CD4-positive, alpha-beta T cell (primary cell): ENCODE measurements at regions of chr7 and their contacts with region 1.

Region 1: DNA sequence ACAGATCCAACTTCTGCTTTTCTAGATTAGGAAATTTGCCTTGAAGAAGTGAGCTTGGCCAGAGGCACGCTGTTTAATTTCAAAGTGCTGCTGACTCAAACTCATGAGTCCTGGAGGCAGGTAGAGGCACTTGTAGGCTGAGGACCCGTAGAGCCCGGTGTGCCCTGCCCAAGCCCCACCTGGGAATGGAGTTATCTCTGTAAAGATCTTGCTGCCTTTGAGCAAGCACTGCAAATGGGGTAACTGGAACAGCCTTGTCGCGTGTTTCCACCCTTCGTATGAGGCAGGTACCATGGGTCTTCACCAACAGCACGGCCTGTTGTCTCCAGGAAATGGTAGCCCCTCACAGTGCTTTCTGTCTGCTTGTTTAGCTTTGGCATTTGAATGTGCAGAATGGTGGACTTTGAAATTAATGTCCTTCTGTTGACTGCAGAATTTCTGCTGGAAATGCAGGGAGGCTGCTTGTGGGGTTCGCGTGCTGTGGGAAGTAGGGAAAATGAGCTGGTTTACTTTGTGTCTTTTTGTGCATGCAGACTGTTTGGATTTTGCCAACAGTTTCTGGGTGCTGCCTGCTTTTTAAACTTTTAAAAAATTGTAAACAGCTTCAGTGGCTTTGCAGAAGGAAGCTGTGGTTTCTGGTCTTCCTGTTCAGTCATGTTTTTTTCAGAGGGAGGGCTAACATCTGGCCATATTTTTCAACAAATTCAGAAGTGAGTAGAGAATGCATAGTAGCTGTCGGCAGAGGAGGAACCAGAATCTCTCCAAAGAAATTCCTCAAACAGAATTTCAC is 27.2 kb downstream of the CCM2 start:
- DNase-seq: peak in 11 of 14 experiments; percentile 13 to 82 (median 36)
- ATAC-seq: peak; percentile 57
- H3K4me3 ChIP-seq: peak overlapping the region; percentile 96
- H3K4me3 Mint-ChIP-seq: peak overlapping the region; percentile 94
- H3K27ac ChIP-seq: peak overlapping the region; percentile 82 to 83
- H3K27ac Mint-ChIP-seq: peak overlapping the region; percentile 95
- H3K4me1 ChIP-seq: peaks cover 56% of the 10 kb centered on the region
- H3K4me1 Mint-ChIP-seq: peaks cover 67% of the 10 kb centered on the region
- H3K27me3 ChIP-seq: no peaks in the 10 kb centered on the region
- H3K27me3 Mint-ChIP-seq: no peaks in the 10 kb centered on the region
- CTCF ChIP-seq: no peak

Region 2: DNA sequence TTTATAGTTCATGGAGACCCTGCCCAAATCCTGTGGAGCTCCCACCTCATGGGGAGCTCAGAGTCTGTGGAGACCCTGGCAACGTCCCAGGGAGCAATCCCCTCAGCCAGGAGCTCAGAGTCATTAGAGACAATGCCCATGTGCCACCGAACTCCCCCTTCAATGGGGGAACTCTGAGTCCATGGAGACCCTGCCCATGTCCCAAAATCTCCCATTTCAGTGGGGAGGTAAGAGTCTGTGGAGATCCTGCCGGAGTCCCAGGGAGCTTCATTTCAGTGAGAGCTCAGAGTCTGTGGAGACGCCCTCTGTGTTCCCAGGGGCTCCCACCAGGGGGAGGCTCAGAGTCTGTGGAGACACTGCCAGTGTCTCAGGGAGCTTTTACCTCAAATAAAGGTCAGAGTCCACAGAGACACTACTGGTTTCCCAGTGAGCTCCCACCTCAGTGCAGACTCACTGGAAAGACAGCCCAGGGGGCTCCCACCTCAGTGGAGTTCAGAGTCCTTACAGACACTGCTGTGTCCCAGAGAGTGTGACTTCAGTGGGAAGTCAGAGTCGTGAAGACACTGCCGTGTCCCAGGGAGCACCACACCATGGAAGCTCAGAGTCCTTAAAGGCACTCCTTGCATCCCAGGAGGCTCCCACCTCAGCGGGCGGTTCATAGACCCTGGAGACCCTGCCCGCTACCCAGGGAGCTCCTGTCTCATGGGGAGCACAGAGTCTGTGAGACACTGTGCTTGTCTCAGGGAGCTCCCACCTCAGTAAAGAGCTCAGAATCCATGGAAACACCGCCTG is 53.4 kb before region 1 on chr7:
- CTCF ChIA-PET with region 1: interaction called, 13 read pairs
- POLR2A ChIA-PET with region 1: interaction called, 321 read pairs
- intact Hi-C with region 1: loop called (anchors 1 to 2 kb)
- DNase-seq: peak; percentile 45 to 78 (median 65)
- ATAC-seq: peak; percentile 48
- H3K4me3 ChIP-seq: no peak overlapping the region
- H3K4me3 Mint-ChIP-seq: peak overlapping the region; percentile 25
- H3K27ac ChIP-seq: peak overlapping the region in 1 of 2 donors; percentile 1
- H3K27ac Mint-ChIP-seq: peak overlapping the region; percentile 95
- H3K4me1 ChIP-seq: peaks cover 73% of the 10 kb centered on the region
- H3K4me1 Mint-ChIP-seq: peaks cover 45% of the 10 kb centered on the region
- H3K27me3 ChIP-seq: no peaks in the 10 kb centered on the region
- H3K27me3 Mint-ChIP-seq: no peaks in the 10 kb centered on the region
- CTCF ChIP-seq: peak; percentile 67

Region 3: GRCh38 chr7:44980393-44981034 is 46.7 kb before region 1 on chr7:
- CTCF ChIA-PET with region 1: interaction called, 3 read pairs
- POLR2A ChIA-PET with region 1: interaction called, 321 read pairs
- intact Hi-C with region 1: loop called (anchors 1 to 5 kb)
- DNase-seq: peak in 6 of 14 experiments; percentile 45 to 91 (median 72)
- ATAC-seq: peak; percentile 19
- H3K4me3 ChIP-seq: no peak overlapping the region
- H3K4me3 Mint-ChIP-seq: peak overlapping the region; percentile 79
- H3K27ac ChIP-seq: peak overlapping the region; percentile 90 to 92
- H3K27ac Mint-ChIP-seq: peak overlapping the region; percentile 95
- H3K4me1 ChIP-seq: peaks cover 90% of the 10 kb centered on the region
- H3K4me1 Mint-ChIP-seq: peaks cover 90% of the 10 kb centered on the region
- H3K27me3 ChIP-seq: no peaks in the 10 kb centered on the region
- H3K27me3 Mint-ChIP-seq: no peaks in the 10 kb centered on the region
- CTCF ChIP-seq: no peak

Region 4: DNA sequence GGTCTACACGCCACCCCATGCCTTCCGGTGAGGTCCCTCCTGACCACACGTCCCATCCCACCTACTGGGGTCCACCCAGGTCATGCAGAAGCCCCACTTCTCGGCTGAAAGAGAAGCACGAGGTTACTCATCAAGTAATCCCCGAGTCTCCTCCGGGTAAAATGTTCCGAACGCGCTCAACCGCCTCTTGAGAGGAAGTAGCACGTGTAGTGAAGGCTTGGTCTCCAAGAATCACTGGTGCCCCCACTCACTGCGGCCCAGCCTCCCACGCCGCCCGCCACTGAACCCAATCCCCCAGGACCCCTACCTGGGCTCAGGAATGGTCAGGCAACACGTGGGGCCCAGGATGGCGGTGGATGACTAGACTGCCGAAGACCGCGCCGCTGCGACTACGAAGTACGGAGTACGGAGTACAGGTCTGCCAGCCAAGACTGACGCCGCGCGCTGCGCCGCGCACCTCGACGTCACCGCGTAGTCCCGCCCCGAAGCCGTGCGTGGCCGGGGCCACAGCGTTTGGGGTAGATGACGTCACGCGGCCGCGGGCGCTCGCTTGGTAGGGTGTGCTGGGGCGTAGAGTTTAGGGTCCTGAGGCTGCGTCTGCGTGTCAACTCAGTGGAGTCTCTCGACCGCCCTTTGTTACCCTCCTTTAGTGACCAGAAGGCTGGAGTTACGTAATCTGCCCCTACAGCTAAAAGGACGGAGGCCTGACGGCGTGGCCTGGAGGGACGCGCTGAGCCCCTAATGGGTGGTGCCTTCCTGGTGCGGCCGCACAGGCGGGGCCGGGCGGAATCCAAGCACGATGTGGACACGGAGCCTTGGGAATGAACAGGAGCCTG is 40.7 kb before region 1 on chr7:
- CTCF ChIA-PET with region 1: interaction called, 3 read pairs
- POLR2A ChIA-PET with region 1: interaction called, 321 read pairs
- intact Hi-C with region 1: loop called in 1 of 2 experiments (anchors 5 kb)
- DNase-seq: peak; percentile 86 to 99 (median 94)
- ATAC-seq: peak; percentile 93
- H3K4me3 ChIP-seq: peak overlapping the region; percentile 74
- H3K4me3 Mint-ChIP-seq: peak overlapping the region; percentile 95
- H3K27ac ChIP-seq: peak overlapping the region; percentile 94 to 95
- H3K27ac Mint-ChIP-seq: peak overlapping the region; percentile 95
- H3K4me1 ChIP-seq: peaks cover 52% of the 10 kb centered on the region
- H3K4me1 Mint-ChIP-seq: peaks cover 50% of the 10 kb centered on the region
- H3K27me3 ChIP-seq: no peaks in the 10 kb centered on the region
- H3K27me3 Mint-ChIP-seq: no peaks in the 10 kb centered on the region
- CTCF ChIP-seq: no peak

Region 5: DNA sequence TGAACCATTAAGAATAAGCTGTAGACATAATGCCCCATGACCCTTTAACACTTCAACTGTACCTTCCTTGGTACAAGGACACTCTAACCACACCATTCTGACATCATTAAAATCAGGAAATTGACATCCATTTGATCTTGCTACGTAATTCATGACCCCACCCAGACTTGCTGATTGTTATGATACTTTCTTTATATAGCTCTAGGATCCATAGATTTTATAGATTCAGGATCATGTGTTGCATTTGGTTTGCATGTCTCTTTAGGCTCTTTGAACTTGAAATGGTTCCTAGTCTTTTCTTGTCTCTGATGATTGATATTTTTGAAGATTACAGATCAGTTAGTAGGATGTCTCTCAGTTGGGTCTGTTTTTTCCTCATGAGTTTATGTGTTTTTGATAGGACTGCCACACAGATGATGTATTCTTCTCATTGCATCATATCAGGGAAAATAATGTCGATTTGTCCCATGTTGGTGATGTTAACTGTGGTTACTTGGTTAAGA is 13.7 kb before region 1 on chr7:
- CTCF ChIA-PET with region 1: interaction called, 4 read pairs
- POLR2A ChIA-PET with region 1: interaction called, 25 read pairs
- intact Hi-C with region 1: loop called in 1 of 2 experiments (anchors 2 kb)
- DNase-seq: peak in 3 of 14 experiments; percentile 49 to 74 (median 59)
- ATAC-seq: peak; percentile 84
- H3K4me3 ChIP-seq: no peak overlapping the region
- H3K4me3 Mint-ChIP-seq: peak overlapping the region; percentile 7
- H3K27ac ChIP-seq: no peak overlapping the region
- H3K27ac Mint-ChIP-seq: peak overlapping the region; percentile 76
- H3K4me1 ChIP-seq: peaks cover 4% of the 10 kb centered on the region
- H3K4me1 Mint-ChIP-seq: peaks cover 41% of the 10 kb centered on the region
- H3K27me3 ChIP-seq: no peaks in the 10 kb centered on the region
- H3K27me3 Mint-ChIP-seq: no peaks in the 10 kb centered on the region
- CTCF ChIP-seq: no peak

Region 6: DNA sequence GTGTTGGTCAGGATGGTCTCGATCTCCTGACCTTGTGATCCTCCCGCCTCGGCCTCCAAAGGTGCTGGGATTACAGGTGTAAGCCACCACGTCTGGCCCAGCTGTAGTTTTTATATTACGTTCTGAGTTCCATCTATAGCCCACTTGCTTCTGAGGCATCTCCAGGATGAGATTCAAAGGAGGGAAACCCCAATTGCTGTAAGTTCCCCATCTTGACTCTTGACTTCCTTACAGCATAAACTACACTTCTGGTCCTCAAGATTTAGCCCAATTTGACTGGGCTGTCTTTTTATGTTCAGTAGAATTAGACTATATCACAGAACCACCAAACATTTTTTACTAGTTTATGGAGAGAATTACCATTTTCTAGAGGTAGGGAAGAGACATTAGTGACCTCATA is 17.2 kb after region 1 on chr7:
- CTCF ChIA-PET with region 1: no interaction called
- POLR2A ChIA-PET with region 1: interaction called, 13 read pairs
- intact Hi-C with region 1: no loop called
- DNase-seq: no peak
- ATAC-seq: no peak
- H3K4me3 ChIP-seq: no peak overlapping the region
- H3K4me3 Mint-ChIP-seq: no peak overlapping the region
- H3K27ac ChIP-seq: no peak overlapping the region
- H3K27ac Mint-ChIP-seq: peak overlapping the region; percentile 88
- H3K4me1 ChIP-seq: peaks cover 10% of the 10 kb centered on the region
- H3K4me1 Mint-ChIP-seq: peaks cover 62% of the 10 kb centered on the region
- H3K27me3 ChIP-seq: no peaks in the 10 kb centered on the region
- H3K27me3 Mint-ChIP-seq: no peaks in the 10 kb centered on the region
- CTCF ChIP-seq: no peak